IMR-90 (cell line): ENCODE measurements at regions of chr10 and their contacts with region 1.

Region 1: DNA sequence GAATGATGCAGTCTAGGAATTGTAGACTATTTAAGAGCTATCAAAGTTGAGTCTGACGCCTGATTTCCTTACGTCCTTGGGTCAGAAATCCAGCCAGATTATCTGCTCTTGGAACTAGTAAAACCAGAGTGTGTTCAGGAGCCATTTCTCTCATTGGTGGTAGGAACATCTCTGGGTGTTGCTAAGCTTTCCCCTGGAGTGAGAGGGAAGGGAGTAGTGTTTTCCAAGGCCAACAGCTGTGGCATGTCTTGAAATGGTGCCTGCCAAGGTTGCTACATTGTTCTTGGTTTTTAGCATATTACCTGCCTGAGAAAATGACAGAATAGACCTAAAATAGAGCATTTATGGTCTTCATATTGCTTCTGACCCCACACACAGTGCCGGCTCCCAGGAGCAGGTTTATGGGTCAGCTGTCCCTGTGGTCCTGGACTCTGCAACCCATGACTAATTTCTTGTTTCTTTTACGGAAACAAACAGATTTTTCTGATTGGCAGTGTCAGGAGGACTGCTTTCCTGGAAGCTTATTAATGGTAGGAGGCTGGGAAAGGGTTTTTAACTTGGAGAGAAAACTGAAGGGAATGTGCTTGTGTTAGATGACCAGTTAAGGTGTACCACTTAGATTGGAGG is 17.5 kb downstream of the GBF1 start:
- DNase-seq: no peak
- ATAC-seq: no peak
- H3K4me3 ChIP-seq: no peak overlapping the region
- H3K27ac ChIP-seq: no peak overlapping the region
- H3K4me1 ChIP-seq: peaks cover 9% of the 10 kb centered on the region
- H3K27me3 ChIP-seq: no peaks in the 10 kb centered on the region
- CTCF ChIP-seq: no peak
- POLR2A ChIP-seq: no peak
- RAD21 ChIP-seq: no peak

Region 2: DNA sequence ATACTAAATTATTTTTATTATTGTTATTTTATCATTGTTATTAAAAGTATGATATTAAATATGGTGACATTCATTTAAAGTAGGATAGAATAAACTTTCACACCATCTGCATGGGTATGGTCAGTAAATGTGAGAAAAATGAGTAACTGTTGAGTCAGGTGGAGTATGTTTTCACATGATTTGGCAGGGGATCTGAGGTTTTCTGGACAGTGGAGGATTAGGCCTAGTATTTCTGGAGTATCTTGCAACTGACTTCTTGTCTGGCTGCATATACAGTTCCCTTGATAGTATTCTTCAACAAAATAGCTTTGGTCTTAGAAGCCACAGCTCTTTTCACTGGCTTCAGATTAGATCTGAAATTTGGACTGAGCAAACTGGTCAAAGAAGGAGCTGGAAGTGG is 37.0 kb after region 1 on chr10:
- CTCF ChIA-PET with region 1: no interaction called
- POLR2A ChIA-PET with region 1: no interaction called
- dilution Hi-C with region 1: no loop called
- in situ Hi-C with region 1: no loop called
- intact Hi-C with region 1: loop called (anchors 5 kb)
- DNase-seq: peak; percentile 76
- ATAC-seq: peak; percentile 45
- H3K4me3 ChIP-seq: peak overlapping the region; percentile 8; the same call in 1 of the 2 replicates
- H3K27ac ChIP-seq: no peak overlapping the region
- H3K4me1 ChIP-seq: peaks cover 3% of the 10 kb centered on the region; the same call in 1 of the 2 replicates
- H3K27me3 ChIP-seq: no peaks in the 10 kb centered on the region
- CTCF ChIP-seq: no peak
- POLR2A ChIP-seq: no peak
- RAD21 ChIP-seq: no peak